Activated naive CD4-positive, alpha-beta T cell treated with anti-CD3 and anti-CD28 coated beads for 36 hours (primary cell): ENCODE measurements at regions of chr2 and their contacts with region 1.

Region 1: DNA sequence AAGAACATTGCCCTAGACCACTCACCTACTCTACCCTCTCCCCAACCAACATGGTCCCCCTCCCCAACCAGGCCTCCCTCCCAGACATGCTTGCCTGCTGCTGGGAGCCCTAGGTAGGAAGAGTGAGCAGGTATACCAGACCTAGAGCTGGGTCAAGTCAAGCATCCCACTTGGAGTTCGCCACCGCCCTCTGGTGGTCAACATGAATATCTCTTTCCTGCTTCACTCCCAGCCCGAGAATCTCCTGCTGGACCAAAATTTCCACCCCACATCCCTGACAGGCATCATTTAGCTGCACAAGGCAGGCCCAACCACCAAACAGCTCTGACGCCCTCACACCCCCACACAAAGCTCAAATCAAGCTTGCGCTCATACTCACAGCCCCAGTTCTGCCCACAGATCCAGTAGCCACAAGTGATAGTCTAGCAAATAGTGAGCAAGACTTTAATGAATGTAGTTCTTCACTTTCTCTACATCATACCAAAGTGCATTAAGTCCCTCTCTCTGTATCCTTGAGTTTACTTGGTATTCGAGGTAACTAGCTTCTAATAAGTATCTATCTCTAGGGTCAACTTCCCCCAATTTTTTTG is 116.0 kb downstream of the TNS1 start:
- DNase-seq: peak; percentile 84
- H3K4me3 Mint-ChIP-seq: no peak overlapping the region
- H3K27ac Mint-ChIP-seq: no peak overlapping the region
- H3K4me1 Mint-ChIP-seq: no peaks in the 10 kb centered on the region
- H3K27me3 Mint-ChIP-seq: no peaks in the 10 kb centered on the region

Region 2: DNA sequence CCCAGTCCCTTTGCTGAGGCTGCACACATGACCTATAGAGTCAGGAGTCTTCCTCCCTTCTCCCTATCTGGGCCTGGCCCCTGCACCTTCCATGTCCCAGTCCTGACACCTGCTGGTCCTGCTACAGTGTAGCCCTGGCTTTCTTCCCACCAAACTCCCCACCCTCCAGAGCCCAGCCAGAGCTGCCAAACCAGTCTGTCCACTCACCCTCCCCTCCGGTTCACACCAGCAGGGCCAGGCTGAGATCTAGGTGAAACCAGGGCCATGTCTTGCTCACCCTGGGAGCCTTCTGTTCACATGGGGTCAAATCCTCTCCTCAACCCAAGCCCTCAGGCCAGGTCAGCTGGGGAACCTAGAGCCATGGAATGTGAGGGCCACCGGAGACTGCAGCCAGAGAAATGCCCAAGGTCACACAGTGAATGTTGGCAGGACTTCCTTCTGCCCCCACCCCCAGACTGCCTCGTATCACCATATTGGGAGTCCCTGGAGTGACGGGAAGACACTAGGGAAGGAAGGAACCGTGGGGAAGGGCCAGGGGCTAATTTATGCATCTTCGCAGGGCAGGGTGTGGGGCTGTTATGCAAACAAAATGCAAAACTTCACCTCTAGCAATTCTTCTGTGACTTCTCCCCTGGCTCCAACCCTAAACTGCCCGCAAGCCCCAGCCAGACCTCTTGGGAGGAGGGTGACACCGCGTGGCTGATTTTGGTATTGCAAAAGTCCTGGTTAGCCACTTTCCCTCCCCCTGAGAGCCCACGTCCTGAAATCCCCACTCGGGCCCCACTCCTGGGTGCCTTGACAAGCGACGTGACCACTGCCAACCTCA is 101.4 kb after region 1 on chr2:
- CTCF ChIA-PET with region 1: interaction called, 3 read pairs
- intact Hi-C with region 1: loop called (anchors 1 kb)
- DNase-seq: peak; percentile 85
- H3K4me3 Mint-ChIP-seq: no peak overlapping the region
- H3K27ac Mint-ChIP-seq: no peak overlapping the region
- H3K4me1 Mint-ChIP-seq: no peaks in the 10 kb centered on the region
- H3K27me3 Mint-ChIP-seq: no peaks in the 10 kb centered on the region

Region 3: GRCh38 chr2:218063486-218063885 is 176.7 kb after region 1 on chr2:
- CTCF ChIA-PET with region 1: no interaction called
- intact Hi-C with region 1: loop called (anchors 1 kb)
- DNase-seq: no peak
- H3K4me3 Mint-ChIP-seq: no peak overlapping the region
- H3K27ac Mint-ChIP-seq: no peak overlapping the region
- H3K4me1 Mint-ChIP-seq: no peaks in the 10 kb centered on the region
- H3K27me3 Mint-ChIP-seq: peaks cover 4% of the 10 kb centered on the region